K562 (cell line): ENCODE measurements at regions of chr7 and their contacts with region 1.

Region 1: GRCh38 chr7:139359366-139360209 is at the start of gene LUC7L2:
- DNase-seq: peak; percentile 97 to 100 (median 98)
- ATAC-seq: peak; percentile 81
- H3K4me3 ChIP-seq: peak within 1 kb of the TSS; percentile 65
- H3K27ac ChIP-seq: peak within 1 kb of the TSS; percentile 98
- H3K4me1 ChIP-seq: peaks cover 10 to 22% of the 10 kb centered on the region in 2 experiments
- H3K27me3 ChIP-seq: no peaks in the 10 kb centered on the region
- CTCF ChIP-seq: peak in 2 of 3 experiments; percentile 38 to 65; a peak in 2 of 6 replicates
- EP300 ChIP-seq: peak; percentile 68
- POLR2A ChIP-seq: peak; percentile 100
- RAD21 ChIP-seq: no peak
- polyA plus RNA-seq, gene LUC7L2: 56.1 to 66.5 TPM

Region 2: DNA sequence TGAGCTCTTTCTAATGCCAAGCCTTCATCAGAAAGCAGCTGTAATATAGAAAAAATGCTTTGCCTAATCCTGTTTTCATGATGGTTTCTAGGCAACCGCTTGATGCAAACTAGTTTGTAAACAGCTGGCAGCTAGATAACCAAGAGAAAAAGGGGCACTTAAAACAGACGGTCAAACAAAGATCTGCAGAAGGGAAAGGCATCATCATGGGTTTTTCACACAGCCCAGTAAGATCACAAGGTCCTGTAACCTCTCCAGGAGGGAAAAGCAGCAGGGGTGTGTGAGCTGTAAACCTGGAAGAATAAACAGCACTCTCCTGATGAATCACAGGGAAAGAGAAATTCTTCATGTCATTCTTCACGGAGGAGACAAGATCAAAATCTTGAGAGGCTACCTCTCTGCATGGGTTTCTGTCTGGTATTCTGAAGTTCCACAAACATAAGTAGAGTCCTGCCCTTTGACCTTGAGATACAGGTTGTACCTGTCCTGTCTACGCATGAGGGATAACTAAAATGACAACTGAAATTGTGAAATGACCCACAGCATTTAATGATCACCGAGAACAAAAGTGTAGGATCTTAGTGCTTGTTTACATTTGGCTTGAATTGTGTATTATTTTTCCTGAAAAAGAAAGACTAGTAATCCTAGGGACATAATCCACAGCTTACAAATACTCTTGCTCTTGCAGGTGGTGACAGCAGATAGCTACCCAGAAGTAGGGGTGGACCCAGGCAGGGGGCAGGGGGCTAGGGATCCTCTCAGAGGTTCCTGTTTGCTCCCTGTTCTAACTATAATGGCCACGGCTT is 1405.7 kb before region 1 on chr7:
- CTCF ChIA-PET with region 1: no interaction called
- POLR2A ChIA-PET with region 1: no interaction called
- in situ Hi-C with region 1: loop called (anchors 25 kb)
- intact Hi-C with region 1: no loop called
- DNase-seq: peak in 3 of 4 experiments; percentile 53 to 68 (median 53)
- ATAC-seq: peak; percentile 48
- H3K4me3 ChIP-seq: no peak overlapping the region
- H3K27ac ChIP-seq: peak overlapping the region; percentile 48
- H3K4me1 ChIP-seq: peaks cover 28 to 74% of the 10 kb centered on the region in 2 experiments
- H3K27me3 ChIP-seq: no peaks in the 10 kb centered on the region
- CTCF ChIP-seq: no peak
- EP300 ChIP-seq: no peak
- POLR2A ChIP-seq: no peak
- RAD21 ChIP-seq: no peak

Region 3: GRCh38 chr7:139169801-139170200 is 189.8 kb before region 1 on chr7:
- CTCF ChIA-PET with region 1: no interaction called
- POLR2A ChIA-PET with region 1: no interaction called
- in situ Hi-C with region 1: no loop called
- intact Hi-C with region 1: no loop called
- DNase-seq: no peak
- ATAC-seq: no peak
- H3K4me3 ChIP-seq: no peak overlapping the region
- H3K27ac ChIP-seq: no peak overlapping the region
- H3K4me1 ChIP-seq: no peaks in the 10 kb centered on the region
- H3K27me3 ChIP-seq: no peaks in the 10 kb centered on the region
- CTCF ChIP-seq: no peak
- EP300 ChIP-seq: no peak
- POLR2A ChIP-seq: no peak
- RAD21 ChIP-seq: no peak

Region 4: GRCh38 chr7:139370301-139370942 is 10.8 kb after region 1 on chr7:
- CTCF ChIA-PET with region 1: no interaction called
- POLR2A ChIA-PET with region 1: interaction called, 37 read pairs
- in situ Hi-C with region 1: no loop called
- intact Hi-C with region 1: no loop called
- DNase-seq: no peak
- ATAC-seq: peak; percentile 58
- H3K4me3 ChIP-seq: no peak overlapping the region
- H3K27ac ChIP-seq: peak overlapping the region; percentile 20; the same call in 2 of the 3 replicates
- H3K4me1 ChIP-seq: peaks cover 0 to 20% of the 10 kb centered on the region in 2 experiments; a peak in 3 of 5 replicates
- H3K27me3 ChIP-seq: no peaks in the 10 kb centered on the region
- CTCF ChIP-seq: no peak
- EP300 ChIP-seq: no peak
- POLR2A ChIP-seq: no peak
- RAD21 ChIP-seq: no peak

Region 5: GRCh38 chr7:139382439-139382838 is 22.9 kb after region 1 on chr7:
- CTCF ChIA-PET with region 1: no interaction called
- POLR2A ChIA-PET with region 1: interaction called, 14 read pairs
- in situ Hi-C with region 1: no loop called
- intact Hi-C with region 1: no loop called
- DNase-seq: no peak
- ATAC-seq: no peak; the same call in 2 of the 3 replicates
- H3K4me3 ChIP-seq: no peak overlapping the region
- H3K27ac ChIP-seq: no peak overlapping the region
- H3K4me1 ChIP-seq: peaks cover 0 to 4% of the 10 kb centered on the region in 2 experiments; a peak in 1 of 5 replicates
- H3K27me3 ChIP-seq: no peaks in the 10 kb centered on the region
- CTCF ChIP-seq: no peak
- EP300 ChIP-seq: no peak
- POLR2A ChIP-seq: no peak
- RAD21 ChIP-seq: no peak

Region 6: DNA sequence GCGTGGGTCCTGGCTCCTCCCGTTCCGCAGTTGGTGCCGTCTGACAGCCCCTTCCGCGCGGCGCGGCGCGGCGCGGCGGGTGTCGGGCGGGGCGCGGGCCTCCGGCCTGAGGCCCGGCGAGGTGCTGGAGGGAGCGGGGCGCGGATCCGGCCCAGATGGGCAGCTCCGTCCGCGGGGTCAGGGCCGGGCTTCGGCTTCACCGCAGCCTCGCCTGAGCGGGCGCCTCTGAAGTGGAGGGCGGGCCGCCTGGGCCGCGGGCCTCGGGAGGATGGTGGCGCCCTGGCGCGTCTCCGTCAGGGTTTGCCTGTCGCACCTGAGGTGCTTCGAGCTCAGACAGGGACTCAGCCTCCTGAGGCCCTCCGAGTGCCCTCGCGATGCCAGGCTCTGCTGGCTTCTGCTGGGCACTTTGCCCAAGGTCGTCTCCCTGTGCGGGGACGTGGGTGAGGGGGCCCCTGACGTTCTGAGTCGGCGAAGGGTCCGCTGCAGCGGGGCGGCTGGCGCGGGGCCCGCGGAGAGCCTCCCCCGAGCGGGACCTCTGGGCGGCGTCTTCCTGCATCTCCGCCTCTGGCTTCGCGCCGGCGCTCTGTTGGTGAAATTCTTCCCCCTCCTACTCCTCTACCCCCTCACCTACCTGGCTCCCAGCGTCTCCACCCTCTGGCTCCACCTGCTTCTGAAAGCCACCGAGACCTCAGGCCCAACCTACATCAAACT is 1313.6 kb after region 1 on chr7:
- CTCF ChIA-PET with region 1: no interaction called
- POLR2A ChIA-PET with region 1: no interaction called
- in situ Hi-C with region 1: no loop called
- intact Hi-C with region 1: no loop called
- DNase-seq: peak; percentile 62 to 77 (median 70)
- ATAC-seq: peak; percentile 79
- H3K4me3 ChIP-seq: peak overlapping the region; percentile 77
- H3K27ac ChIP-seq: peak overlapping the region; percentile 57; the same call in 2 of the 3 replicates
- H3K4me1 ChIP-seq: peaks cover 24 to 34% of the 10 kb centered on the region in 2 experiments; a peak in 4 of 5 replicates
- H3K27me3 ChIP-seq: no peaks in the 10 kb centered on the region
- CTCF ChIP-seq: no peak; a peak in 1 of 6 replicates
- EP300 ChIP-seq: no peak
- POLR2A ChIP-seq: peak; percentile 48; the same call in 1 of the 2 replicates
- RAD21 ChIP-seq: no peak